PC-9 (cell line): ENCODE measurements at regions of chr2 and their contacts with region 1.

Region 1: GRCh38 chr2:200703127-200703925 is 108.4 kb upstream of the BZW1 start:
- DNase-seq: peak; percentile 27 to 65
- H3K4me3 ChIP-seq: no peak overlapping the region
- H3K27ac ChIP-seq: no peak overlapping the region
- H3K4me1 ChIP-seq: peaks cover 5% of the 10 kb centered on the region; the same call in 1 of the 2 replicates
- H3K27me3 ChIP-seq: no peaks in the 10 kb centered on the region
- CTCF ChIP-seq: peak; percentile 81

Region 2: DNA sequence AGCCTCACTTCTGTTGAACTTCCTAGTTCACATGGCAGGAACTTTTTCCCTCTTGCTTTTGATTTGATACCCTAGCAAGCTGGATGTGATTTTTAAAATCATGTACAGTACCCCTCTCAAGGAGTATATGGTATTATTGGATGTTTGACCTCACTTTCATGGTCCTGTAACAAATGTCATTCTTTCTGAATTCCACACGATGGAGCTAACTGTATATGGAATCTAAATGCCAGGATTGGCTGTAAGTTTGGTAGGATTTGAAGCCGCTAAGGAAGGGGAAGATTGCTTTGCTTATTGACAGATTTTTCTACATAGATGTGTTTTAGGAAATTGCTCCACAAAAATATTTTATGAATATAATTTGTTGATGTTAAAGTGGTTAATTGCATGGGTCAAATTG is 729.6 kb before region 1 on chr2:
- CTCF ChIA-PET with region 1: no interaction called
- POLR2A ChIA-PET with region 1: no interaction called
- intact Hi-C with region 1: loop called (anchors 1 kb)
- DNase-seq: no peak
- H3K4me3 ChIP-seq: no peak overlapping the region
- H3K27ac ChIP-seq: peak overlapping the region; percentile 91; the same call in 1 of the 2 replicates
- H3K4me1 ChIP-seq: peaks cover 37% of the 10 kb centered on the region
- H3K27me3 ChIP-seq: no peaks in the 10 kb centered on the region
- CTCF ChIP-seq: peak; percentile 83

Region 3: GRCh38 chr2:200483729-200484198 is 219.6 kb before region 1 on chr2:
- CTCF ChIA-PET with region 1: interaction called, 7 read pairs
- POLR2A ChIA-PET with region 1: no interaction called
- intact Hi-C with region 1: loop called (anchors 1 kb)
- DNase-seq: peak; percentile 59 to 66
- H3K4me3 ChIP-seq: no peak overlapping the region
- H3K27ac ChIP-seq: no peak overlapping the region
- H3K4me1 ChIP-seq: peaks cover 43% of the 10 kb centered on the region
- H3K27me3 ChIP-seq: no peaks in the 10 kb centered on the region
- CTCF ChIP-seq: peak; percentile 58

Region 4: GRCh38 chr2:200618587-200619021 is 84.7 kb before region 1 on chr2:
- CTCF ChIA-PET with region 1: no interaction called
- POLR2A ChIA-PET with region 1: no interaction called
- intact Hi-C with region 1: loop called (anchors 1 kb)
- DNase-seq: peak in 1 of 2 experiments; percentile 14
- H3K4me3 ChIP-seq: no peak overlapping the region
- H3K27ac ChIP-seq: no peak overlapping the region
- H3K4me1 ChIP-seq: peaks cover 25% of the 10 kb centered on the region
- H3K27me3 ChIP-seq: no peaks in the 10 kb centered on the region
- CTCF ChIP-seq: peak; percentile 30; the same call in 1 of the 2 replicates

Region 5: DNA sequence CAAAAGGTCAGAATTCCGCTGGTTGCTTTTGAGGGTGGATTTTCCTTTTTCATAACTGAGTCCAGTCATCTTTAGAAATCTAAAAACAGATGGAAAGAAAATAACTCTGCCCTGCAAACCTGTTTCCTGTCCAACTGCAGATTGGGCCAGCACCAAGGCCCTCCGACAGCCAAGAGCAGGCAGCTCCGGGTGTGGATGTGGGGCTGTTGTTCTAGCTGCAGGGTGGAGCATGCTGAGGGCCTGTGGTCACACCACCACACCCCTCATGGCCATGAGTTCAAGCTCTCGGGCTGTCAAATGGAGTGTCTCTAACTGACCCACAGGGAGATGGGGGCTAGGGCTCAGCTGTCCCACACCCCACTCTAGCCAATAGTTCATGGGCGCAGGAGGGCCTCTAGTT is 39.1 kb after region 1 on chr2:
- CTCF ChIA-PET with region 1: no interaction called
- POLR2A ChIA-PET with region 1: no interaction called
- intact Hi-C with region 1: no loop called
- DNase-seq: no peak
- H3K4me3 ChIP-seq: no peak overlapping the region
- H3K27ac ChIP-seq: peak overlapping the region; percentile 84
- H3K4me1 ChIP-seq: peaks cover 25% of the 10 kb centered on the region
- H3K27me3 ChIP-seq: no peaks in the 10 kb centered on the region
- CTCF ChIP-seq: no peak

Region 6: GRCh38 chr2:201507725-201508124 is 804.4 kb after region 1 on chr2:
- CTCF ChIA-PET with region 1: no interaction called
- POLR2A ChIA-PET with region 1: no interaction called
- intact Hi-C with region 1: no loop called
- DNase-seq: no peak
- H3K4me3 ChIP-seq: no peak overlapping the region
- H3K27ac ChIP-seq: no peak overlapping the region
- H3K4me1 ChIP-seq: no peaks in the 10 kb centered on the region
- H3K27me3 ChIP-seq: no peaks in the 10 kb centered on the region
- CTCF ChIP-seq: no peak